Endothelial cell of umbilical vein (primary cell): ENCODE measurements at regions of chr20 and their contacts with region 1.

Region 1: GRCh38 chr20:58870239-58871014 is 17.9 kb downstream of the GNAS start:
- DNase-seq: peak; percentile 63
- H3K4me3 ChIP-seq: no peak overlapping the region
- H3K27ac ChIP-seq: no peak overlapping the region
- H3K4me1 ChIP-seq: peaks cover 15% of the 10 kb centered on the region
- H3K27me3 ChIP-seq: peaks cover 12 to 15% of the 10 kb centered on the region in 2 experiments
- CTCF ChIP-seq: peak; percentile 88 to 94
- POLR2A ChIP-seq: no peak

Region 2: DNA sequence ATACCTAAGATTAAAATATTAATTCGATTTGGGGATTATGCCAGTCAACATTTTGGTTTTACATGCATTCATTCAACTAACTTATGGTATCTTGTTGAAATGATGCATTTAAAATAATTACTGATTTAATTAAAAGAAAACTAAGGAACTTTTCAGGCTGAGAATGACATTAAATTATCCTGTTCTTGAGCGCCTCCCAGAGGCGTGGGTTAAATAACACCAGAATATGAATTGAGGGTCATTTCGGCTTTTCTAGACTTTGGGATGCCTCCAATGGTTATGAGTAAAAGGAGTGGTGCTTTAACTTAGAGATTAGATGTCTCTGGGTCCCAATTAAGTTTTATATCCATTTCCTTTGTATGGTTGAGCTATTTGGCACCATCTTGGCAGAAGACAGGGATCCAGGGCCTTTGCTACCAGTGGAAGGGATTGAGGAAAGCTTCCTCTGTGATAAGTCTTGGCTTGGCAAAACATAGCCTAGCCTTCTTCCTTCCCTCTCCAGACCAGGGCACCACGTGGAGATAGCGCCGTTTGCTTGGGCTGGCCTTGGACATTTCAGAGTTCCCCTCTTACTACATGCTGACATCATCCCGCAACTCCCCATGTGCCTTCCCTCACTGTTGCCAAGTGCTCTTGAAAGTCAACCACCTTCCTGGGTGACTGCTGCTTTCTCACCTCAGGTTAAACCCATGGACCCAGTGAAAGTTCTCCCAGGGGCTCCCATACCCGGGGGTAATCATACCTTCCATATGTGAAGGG is 10.7 kb after region 1 on chr20:
- CTCF ChIA-PET with region 1: interaction called, 18 read pairs
- POLR2A ChIA-PET with region 1: no interaction called
- dilution Hi-C with region 1: no loop called
- intact Hi-C with region 1: loop called (anchors 1 kb)
- DNase-seq: no peak
- H3K4me3 ChIP-seq: no peak overlapping the region
- H3K27ac ChIP-seq: no peak overlapping the region
- H3K4me1 ChIP-seq: no peaks in the 10 kb centered on the region
- H3K27me3 ChIP-seq: peaks cover 4 to 15% of the 10 kb centered on the region in 2 experiments
- CTCF ChIP-seq: peak in 1 of 2 donors; percentile 6
- POLR2A ChIP-seq: no peak

Region 3: GRCh38 chr20:58907399-58908137 is 37.1 kb after region 1 on chr20:
- CTCF ChIA-PET with region 1: interaction called, 16 read pairs
- POLR2A ChIA-PET with region 1: no interaction called
- dilution Hi-C with region 1: no loop called
- intact Hi-C with region 1: loop called (anchors 1 kb)
- DNase-seq: peak; percentile 97
- H3K4me3 ChIP-seq: peak overlapping the region in 1 of 3 experiments; percentile 39
- H3K27ac ChIP-seq: peak overlapping the region; percentile 97
- H3K4me1 ChIP-seq: peaks cover 34% of the 10 kb centered on the region
- H3K27me3 ChIP-seq: no peaks in the 10 kb centered on the region
- CTCF ChIP-seq: no peak
- POLR2A ChIP-seq: no peak

Region 4: GRCh38 chr20:59032023-59032712 is 161.7 kb after region 1 on chr20 and contains the start of gene ATP5F1E:
- CTCF ChIA-PET with region 1: interaction called, 10 read pairs
- POLR2A ChIA-PET with region 1: no interaction called
- dilution Hi-C with region 1: no loop called
- intact Hi-C with region 1: no loop called
- DNase-seq: peak; percentile 96
- H3K4me3 ChIP-seq: peak within 1 kb of the TSS; percentile 63 to 76 (median 76)
- H3K27ac ChIP-seq: peak within 1 kb of the TSS; percentile 82
- H3K4me1 ChIP-seq: peaks cover 43% of the 10 kb centered on the region
- H3K27me3 ChIP-seq: no peaks in the 10 kb centered on the region
- CTCF ChIP-seq: no peak
- POLR2A ChIP-seq: peak; percentile 94
- total RNA-seq, gene ATP5F1E: 107 and 114 TPM in 2 replicates

Region 5: DNA sequence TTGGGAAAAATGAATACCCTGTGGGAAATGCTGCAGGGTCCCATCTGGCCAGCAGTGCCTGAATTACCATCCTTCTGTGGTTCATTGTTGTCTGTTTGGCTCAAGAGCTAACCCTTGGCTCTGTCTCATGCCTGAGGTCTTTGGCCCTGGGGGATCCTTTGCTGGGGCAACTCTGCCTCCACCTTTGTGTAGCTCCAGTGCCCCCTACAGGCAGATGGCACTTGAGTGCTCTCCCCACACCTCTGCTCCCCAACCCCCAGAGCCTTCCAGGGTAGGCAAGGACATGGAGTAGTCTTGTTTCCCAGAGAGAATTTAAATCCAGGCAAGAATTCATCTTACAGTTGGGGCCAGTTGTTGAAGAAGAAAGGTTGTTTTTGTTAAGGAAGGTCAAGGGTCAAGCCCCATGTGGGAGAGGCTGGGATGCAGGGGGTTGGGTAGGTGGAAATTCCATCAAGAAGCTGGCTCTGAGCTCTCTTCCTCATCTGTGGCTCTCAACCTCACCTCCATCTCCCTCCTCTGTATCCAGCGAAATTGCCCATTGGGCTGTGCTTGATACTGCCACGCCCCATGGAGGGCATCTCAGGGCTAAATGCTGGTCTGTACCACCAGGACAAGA is 337.4 kb after region 1 on chr20:
- CTCF ChIA-PET with region 1: interaction called, 22 read pairs
- POLR2A ChIA-PET with region 1: no interaction called
- dilution Hi-C with region 1: no loop called
- intact Hi-C with region 1: loop called (anchors 1 kb)
- DNase-seq: peak; percentile 11
- H3K4me3 ChIP-seq: no peak overlapping the region
- H3K27ac ChIP-seq: no peak overlapping the region
- H3K4me1 ChIP-seq: no peaks in the 10 kb centered on the region
- H3K27me3 ChIP-seq: no peaks in the 10 kb centered on the region
- CTCF ChIP-seq: peak; percentile 25 to 37
- POLR2A ChIP-seq: no peak

Region 6: GRCh38 chr20:59403261-59403961 is 533.0 kb after region 1 on chr20:
- CTCF ChIA-PET with region 1: interaction called, 5 read pairs
- POLR2A ChIA-PET with region 1: no interaction called
- dilution Hi-C with region 1: no loop called
- intact Hi-C with region 1: loop called (anchors 1 kb)
- DNase-seq: peak; percentile 16
- H3K4me3 ChIP-seq: no peak overlapping the region
- H3K27ac ChIP-seq: no peak overlapping the region
- H3K4me1 ChIP-seq: no peaks in the 10 kb centered on the region
- H3K27me3 ChIP-seq: peaks cover 9 to 12% of the 10 kb centered on the region in 2 experiments
- CTCF ChIP-seq: peak; percentile 85 to 87
- POLR2A ChIP-seq: no peak

Region 7: DNA sequence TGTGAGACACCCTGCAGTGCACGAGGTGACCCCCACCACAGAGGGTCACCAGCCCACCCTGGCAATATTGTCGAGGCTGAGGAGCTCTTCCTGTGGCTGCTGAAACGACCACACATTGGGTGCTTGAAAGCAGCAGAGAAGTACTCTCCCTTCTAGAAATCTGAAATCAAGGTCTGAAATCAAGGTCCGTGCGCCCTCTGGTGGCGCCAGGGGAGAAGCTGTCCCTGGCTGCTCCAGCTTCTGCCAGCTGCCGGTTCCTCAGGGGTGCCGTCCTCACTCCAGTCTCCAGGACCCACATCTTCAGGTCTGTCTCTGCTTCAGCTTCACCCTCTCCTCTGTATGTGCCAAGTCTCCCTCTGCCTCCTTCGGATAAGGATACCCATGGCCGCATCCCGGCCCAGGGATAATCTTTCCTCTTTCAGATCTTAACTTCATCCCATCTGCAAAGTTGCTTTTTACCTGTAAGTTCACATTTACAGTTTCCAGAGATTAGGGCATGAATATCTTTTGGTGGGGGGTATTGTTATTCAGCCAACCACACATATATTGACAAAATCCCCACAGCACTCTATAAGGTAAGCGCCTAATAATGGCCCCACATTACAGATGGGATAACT is 625.6 kb after region 1 on chr20:
- CTCF ChIA-PET with region 1: interaction called, 57 read pairs
- POLR2A ChIA-PET with region 1: no interaction called
- dilution Hi-C with region 1: no loop called
- intact Hi-C with region 1: loop called (anchors 1 kb)
- DNase-seq: peak; percentile 56
- H3K4me3 ChIP-seq: no peak overlapping the region
- H3K27ac ChIP-seq: no peak overlapping the region
- H3K4me1 ChIP-seq: no peaks in the 10 kb centered on the region
- H3K27me3 ChIP-seq: no peaks in the 10 kb centered on the region
- CTCF ChIP-seq: peak; percentile 82 to 90
- POLR2A ChIP-seq: no peak